ENCODE measurements at regions of chr3 and their contacts with region 1.

Region 1: DNA sequence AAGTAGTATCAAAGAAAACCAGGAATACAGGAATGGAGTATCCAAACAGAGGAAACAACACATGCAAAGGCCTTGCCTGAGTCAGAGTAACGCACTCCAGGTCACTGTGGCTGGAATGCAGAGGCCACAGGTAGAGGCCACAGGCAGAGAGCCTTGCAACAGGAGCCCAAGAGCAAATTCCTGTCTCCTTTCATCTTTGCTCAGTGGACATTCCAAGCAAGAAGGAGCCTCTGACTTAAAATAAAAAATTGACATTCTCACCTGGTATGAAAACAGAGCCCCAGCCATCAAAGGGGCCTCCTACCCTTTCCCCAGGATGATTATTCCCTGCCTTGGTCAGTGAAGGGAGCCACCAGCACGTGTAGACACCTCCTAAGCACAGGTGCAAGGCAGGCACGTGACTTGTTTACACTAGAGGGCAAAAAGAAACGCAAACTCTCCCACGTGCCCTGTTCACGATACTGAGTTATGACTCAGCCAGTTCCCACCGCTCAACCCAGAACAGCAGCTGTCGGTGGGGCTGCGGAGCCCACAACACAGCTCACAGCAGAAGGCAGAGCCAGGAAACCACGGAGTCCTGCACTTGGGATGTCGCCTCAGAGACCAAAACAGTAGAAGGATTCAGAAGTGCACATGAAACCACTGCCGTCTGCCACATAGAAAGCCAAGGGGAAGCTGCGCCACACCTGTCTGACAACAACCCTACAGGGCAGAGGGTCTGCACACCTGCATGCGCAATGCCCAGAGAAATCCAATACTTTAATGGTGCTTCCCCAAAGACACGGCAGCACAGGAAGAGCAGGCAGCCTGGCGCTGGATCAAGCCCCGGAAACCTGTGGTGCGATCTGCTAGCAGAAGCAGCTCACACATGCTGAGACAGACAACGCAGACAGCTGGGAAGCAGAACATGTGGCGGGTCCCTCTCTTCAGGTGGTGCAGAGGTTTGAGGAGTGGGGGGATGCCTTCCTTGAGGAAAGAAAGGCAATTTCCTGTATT is 52.1 kb downstream of the ITGB5 start:
- DNase-seq: peak; percentile 83
- H3K4me3 Mint-ChIP-seq: peak overlapping the region; percentile 64
- H3K27ac Mint-ChIP-seq: peak overlapping the region; percentile 6
- H3K4me1 Mint-ChIP-seq: peaks cover 9% of the 10 kb centered on the region
- H3K27me3 Mint-ChIP-seq: peaks cover 7% of the 10 kb centered on the region

Region 2: DNA sequence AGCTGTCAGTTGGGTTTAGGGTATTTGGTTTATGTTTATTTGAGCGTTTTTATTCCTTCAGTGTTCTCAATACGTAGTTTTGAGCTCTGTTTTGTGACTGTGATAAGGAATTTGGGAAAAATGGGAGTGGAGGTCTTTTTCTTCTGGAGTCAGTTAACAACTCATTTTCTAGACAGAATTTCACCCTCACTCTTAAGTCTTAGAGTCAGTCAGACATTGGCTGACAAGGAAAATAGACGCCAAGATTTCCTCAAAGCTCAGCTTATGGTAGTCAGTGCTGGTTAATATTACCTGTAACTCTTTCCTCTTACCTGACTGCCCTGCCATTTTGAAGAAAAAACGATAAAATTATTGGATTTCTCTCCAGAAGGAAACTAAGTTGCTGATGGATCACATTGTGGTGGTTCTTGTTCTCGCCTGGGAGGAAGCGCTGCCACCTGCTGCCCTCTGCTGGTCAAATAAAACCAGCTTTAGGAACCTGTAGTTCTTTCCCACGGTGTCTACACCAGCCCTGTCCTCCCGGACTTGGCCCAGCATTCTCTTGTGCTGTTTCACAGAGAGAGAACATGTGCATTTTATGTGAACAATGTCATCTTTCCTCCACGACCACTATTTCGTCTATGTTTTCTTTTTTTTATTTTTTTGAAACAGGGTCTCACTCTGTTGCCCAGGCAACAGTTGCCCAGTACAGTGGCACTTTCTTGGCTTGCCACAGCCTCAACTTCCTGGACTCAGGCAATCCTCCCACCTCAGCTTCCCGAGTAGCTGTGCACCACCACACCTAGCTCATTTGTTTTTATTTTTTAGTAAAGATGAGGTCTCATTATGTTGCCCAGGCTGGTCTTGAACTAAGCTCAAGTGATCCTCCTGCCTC is 146.2 kb before region 1 on chr3:
- CTCF ChIA-PET with region 1: no interaction called
- intact Hi-C with region 1: no loop called
- DNase-seq: peak; percentile 89
- H3K4me3 Mint-ChIP-seq: no peak overlapping the region
- H3K27ac Mint-ChIP-seq: no peak overlapping the region
- H3K4me1 Mint-ChIP-seq: peaks cover 9% of the 10 kb centered on the region
- H3K27me3 Mint-ChIP-seq: peaks cover 13% of the 10 kb centered on the region

Region 3: DNA sequence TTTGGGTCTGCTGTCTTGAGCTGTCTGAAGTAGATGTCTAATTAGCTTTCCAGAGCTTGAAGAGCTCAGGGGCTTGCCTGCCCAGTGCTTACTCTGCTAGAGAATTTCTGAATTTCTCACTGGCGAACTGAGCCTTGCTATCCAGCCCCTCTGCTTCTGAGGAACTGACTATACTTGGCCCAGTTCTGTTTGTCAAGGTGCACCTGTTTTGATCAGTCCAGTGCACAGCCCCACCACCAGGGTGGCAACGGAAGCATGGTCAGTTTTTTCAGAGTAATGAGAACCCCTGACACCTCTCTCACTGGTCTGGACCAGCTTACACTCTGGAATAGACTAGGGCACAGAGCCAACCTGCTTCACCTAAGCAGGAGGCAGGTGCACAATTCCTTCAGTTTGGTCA is 27.0 kb after region 1 on chr3:
- CTCF ChIA-PET with region 1: no interaction called
- intact Hi-C with region 1: no loop called
- DNase-seq: no peak
- H3K4me3 Mint-ChIP-seq: no peak overlapping the region
- H3K27ac Mint-ChIP-seq: no peak overlapping the region
- H3K4me1 Mint-ChIP-seq: no peaks in the 10 kb centered on the region
- H3K27me3 Mint-ChIP-seq: no peaks in the 10 kb centered on the region

Region 4: GRCh38 chr3:124873226-124873625 is 38.2 kb after region 1 on chr3:
- CTCF ChIA-PET with region 1: no interaction called
- intact Hi-C with region 1: no loop called
- DNase-seq: no peak
- H3K4me3 Mint-ChIP-seq: no peak overlapping the region
- H3K27ac Mint-ChIP-seq: no peak overlapping the region
- H3K4me1 Mint-ChIP-seq: no peaks in the 10 kb centered on the region
- H3K27me3 Mint-ChIP-seq: peaks cover 3% of the 10 kb centered on the region

Region 5: GRCh38 chr3:124886168-124887056 is 51.4 kb after region 1 on chr3:
- CTCF ChIA-PET with region 1: interaction called, 3 read pairs
- intact Hi-C with region 1: loop called (anchors 1 kb)
- DNase-seq: peak; percentile 51
- H3K4me3 Mint-ChIP-seq: peak overlapping the region; percentile 3
- H3K27ac Mint-ChIP-seq: no peak overlapping the region
- H3K4me1 Mint-ChIP-seq: no peaks in the 10 kb centered on the region
- H3K27me3 Mint-ChIP-seq: peaks cover 35% of the 10 kb centered on the region

Region 6: GRCh38 chr3:124951511-124952281 is 116.7 kb after region 1 on chr3:
- CTCF ChIA-PET with region 1: no interaction called
- intact Hi-C with region 1: no loop called
- DNase-seq: no peak
- H3K4me3 Mint-ChIP-seq: no peak overlapping the region
- H3K27ac Mint-ChIP-seq: no peak overlapping the region
- H3K4me1 Mint-ChIP-seq: no peaks in the 10 kb centered on the region
- H3K27me3 Mint-ChIP-seq: no peaks in the 10 kb centered on the region